ENCODE measurements at regions of chr16 and their contacts with region 1.

Region 1: GRCh38 chr16:57734925-57735754 is 430 bp upstream of the KATNB1 start:
- DNase-seq: peak; percentile 88 to 100 (median 98)
- ATAC-seq: peak; percentile 96
- H3K4me3 ChIP-seq: peak overlapping the region; percentile 93
- H3K4me3 Mint-ChIP-seq: peak overlapping the region; percentile 90 to 99 (median 96)
- H3K27ac ChIP-seq: peak overlapping the region; percentile 80
- H3K27ac Mint-ChIP-seq: peak overlapping the region; percentile 81 to 98 (median 93)
- H3K4me1 ChIP-seq: peaks cover 12 to 14% of the 10 kb centered on the region in 2 donors
- H3K4me1 Mint-ChIP-seq: peaks cover 14 to 38% (median 26%) of the 10 kb centered on the region in 7 donors
- H3K27me3 ChIP-seq: no peaks in the 10 kb centered on the region
- H3K27me3 Mint-ChIP-seq: no peaks in the 10 kb centered on the region

Region 2: GRCh38 chr16:56681939-56682702 is 1053.0 kb before region 1 on chr16 and contains the start of gene MT1X:
- CTCF ChIA-PET with region 1: no interaction called
- POLR2A ChIA-PET with region 1: no interaction called
- intact Hi-C with region 1: loop called in 1 of 2 experiments (anchors 1 kb)
- DNase-seq: peak; percentile 77 to 94 (median 88)
- ATAC-seq: peak; percentile 100
- H3K4me3 ChIP-seq: peak within 1 kb of the TSS; percentile 93
- H3K4me3 Mint-ChIP-seq: peak within 1 kb of the TSS; percentile 86 to 99 (median 96)
- H3K27ac ChIP-seq: peak within 1 kb of the TSS; percentile 81
- H3K27ac Mint-ChIP-seq: peak within 1 kb of the TSS; percentile 89 to 99 (median 95)
- H3K4me1 ChIP-seq: peaks cover 13 to 15% of the 10 kb centered on the region in 2 donors
- H3K4me1 Mint-ChIP-seq: peaks cover 0 to 28% (median 25%) of the 10 kb centered on the region in 7 donors
- H3K27me3 ChIP-seq: no peaks in the 10 kb centered on the region
- H3K27me3 Mint-ChIP-seq: peaks cover 0 to 2% (median 0%) of the 10 kb centered on the region in 5 donors
- total RNA-seq, gene MT1X: 15.0 to 70.7 (median 25.9) TPM

Region 3: GRCh38 chr16:57447186-57447962 is 287.8 kb before region 1 on chr16 and contains the starts of genes CIAPIN1 and COQ9:
- CTCF ChIA-PET with region 1: no interaction called
- POLR2A ChIA-PET with region 1: interaction called, 6 read pairs
- intact Hi-C with region 1: loop called (anchors 1 kb)
- DNase-seq: peak; percentile 83 to 94 (median 88)
- ATAC-seq: peak; percentile 99
- H3K4me3 ChIP-seq: peak within 1 kb of the TSS; percentile 84
- H3K4me3 Mint-ChIP-seq: peak within 1 kb of the TSS; percentile 90 to 97 (median 92)
- H3K27ac ChIP-seq: peak within 1 kb of the TSS; percentile 87
- H3K27ac Mint-ChIP-seq: peak within 1 kb of the TSS; percentile 75 to 96 (median 90)
- H3K4me1 ChIP-seq: peaks cover 7 to 17% of the 10 kb centered on the region in 2 donors
- H3K4me1 Mint-ChIP-seq: peaks cover 15 to 64% (median 45%) of the 10 kb centered on the region in 7 donors
- H3K27me3 ChIP-seq: no peaks in the 10 kb centered on the region
- H3K27me3 Mint-ChIP-seq: no peaks in the 10 kb centered on the region
- total RNA-seq, gene CIAPIN1: 33.6 to 52.8 (median 35.8) TPM
- total RNA-seq, gene COQ9: 16.4 to 45.4 (median 36.6) TPM

Region 4: DNA sequence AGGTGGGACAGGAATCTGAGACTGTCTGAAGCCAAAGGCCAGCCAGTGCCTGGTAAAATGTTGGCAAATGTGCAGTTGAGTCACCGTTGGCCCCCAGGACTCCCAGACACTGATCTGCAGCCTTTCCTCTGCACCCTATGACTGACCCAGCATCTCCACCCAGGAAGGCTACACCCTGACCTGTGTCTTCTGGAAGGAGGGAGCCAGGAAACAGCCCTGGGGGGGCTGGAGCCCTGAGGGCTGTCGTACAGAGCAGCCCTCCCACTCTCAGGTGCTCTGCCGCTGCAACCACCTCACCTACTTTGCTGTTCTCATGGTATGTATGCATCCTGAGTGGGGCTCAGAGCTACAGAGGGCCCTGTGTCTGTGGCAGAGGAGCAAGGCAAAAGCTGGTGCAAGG is 168.7 kb before region 1 on chr16:
- CTCF ChIA-PET with region 1: no interaction called
- POLR2A ChIA-PET with region 1: no interaction called
- intact Hi-C with region 1: no loop called
- DNase-seq: no peak
- ATAC-seq: no peak
- H3K4me3 ChIP-seq: no peak overlapping the region
- H3K4me3 Mint-ChIP-seq: no peak overlapping the region
- H3K27ac ChIP-seq: no peak overlapping the region
- H3K27ac Mint-ChIP-seq: peak overlapping the region in 2 of 9 donors; percentile 5 to 65
- H3K4me1 ChIP-seq: no peaks in the 10 kb centered on the region
- H3K4me1 Mint-ChIP-seq: peaks cover 0 to 6% (median 0%) of the 10 kb centered on the region in 7 donors
- H3K27me3 ChIP-seq: no peaks in the 10 kb centered on the region
- H3K27me3 Mint-ChIP-seq: peaks cover 0 to under 1% (median 0%) of the 10 kb centered on the region in 5 donors

Region 5: DNA sequence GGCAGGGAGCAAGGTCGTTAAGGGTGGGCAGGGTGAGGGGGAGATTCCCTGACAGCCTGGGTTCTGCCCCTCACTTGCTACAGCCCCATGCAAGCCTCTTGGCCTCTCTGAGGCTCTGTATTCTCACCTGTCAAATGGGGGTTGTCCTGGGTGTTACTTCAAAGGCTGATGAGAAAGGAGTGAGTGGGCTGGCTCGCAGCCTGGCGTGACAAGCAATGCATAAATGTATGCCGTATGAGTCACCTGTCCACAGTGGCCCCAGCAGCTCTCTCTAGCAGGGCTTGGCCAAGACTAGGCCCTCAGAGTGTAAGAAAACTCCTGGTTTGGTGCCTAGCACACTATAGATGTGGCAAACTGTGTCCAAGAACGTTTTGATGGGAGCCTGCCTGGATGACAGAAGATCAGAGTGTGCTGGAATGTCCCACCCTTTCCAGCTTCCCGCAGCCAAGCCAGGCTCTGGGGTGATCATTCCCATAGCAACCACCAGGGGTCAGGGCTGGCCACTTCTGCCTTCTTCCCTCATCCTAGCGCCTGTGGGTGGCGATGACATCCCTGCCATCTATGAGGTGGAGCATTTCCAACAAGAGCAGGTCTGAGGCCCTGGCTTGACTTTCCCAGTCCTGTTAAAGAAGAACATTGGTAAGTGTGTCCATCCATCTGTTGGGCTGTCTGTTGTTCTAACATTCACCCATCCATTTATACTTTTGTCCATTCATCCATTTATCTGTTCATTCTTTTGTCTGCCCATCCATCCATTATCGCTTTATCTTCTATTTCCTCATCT is 143.9 kb before region 1 on chr16:
- CTCF ChIA-PET with region 1: no interaction called
- POLR2A ChIA-PET with region 1: no interaction called
- intact Hi-C with region 1: loop called (anchors 2 to 5 kb)
- DNase-seq: peak; percentile 30 to 72 (median 48)
- ATAC-seq: peak; percentile 70
- H3K4me3 ChIP-seq: peak overlapping the region; percentile 25
- H3K4me3 Mint-ChIP-seq: peak overlapping the region; percentile 9 to 83 (median 69)
- H3K27ac ChIP-seq: no peak overlapping the region
- H3K27ac Mint-ChIP-seq: peak overlapping the region; percentile 17 to 92 (median 75)
- H3K4me1 ChIP-seq: peaks cover 27 to 47% of the 10 kb centered on the region in 2 donors
- H3K4me1 Mint-ChIP-seq: peaks cover 26 to 43% (median 38%) of the 10 kb centered on the region in 7 donors
- H3K27me3 ChIP-seq: no peaks in the 10 kb centered on the region
- H3K27me3 Mint-ChIP-seq: peaks cover 0 to 2% (median 0%) of the 10 kb centered on the region in 5 donors

Region 6: GRCh38 chr16:57694725-57695679 is 40.1 kb before region 1 on chr16 and contains the start of gene DRC7:
- CTCF ChIA-PET with region 1: no interaction called
- POLR2A ChIA-PET with region 1: interaction called, 6 read pairs
- intact Hi-C with region 1: loop called in 1 of 2 experiments (anchors 5 kb)
- DNase-seq: peak in 2 of 9 donors; percentile 7 to 8
- ATAC-seq: peak; percentile 60
- H3K4me3 ChIP-seq: no peak within 1 kb of the TSS
- H3K4me3 Mint-ChIP-seq: peak within 1 kb of the TSS in 5 of 10 donors; percentile 4 to 75 (median 25)
- H3K27ac ChIP-seq: no peak within 1 kb of the TSS
- H3K27ac Mint-ChIP-seq: peak within 1 kb of the TSS in 5 of 9 donors; percentile 48 to 87 (median 65)
- H3K4me1 ChIP-seq: peaks cover 5% of the 10 kb centered on the region in 2 donors
- H3K4me1 Mint-ChIP-seq: peaks cover 3 to 19% (median 10%) of the 10 kb centered on the region in 7 donors
- H3K27me3 ChIP-seq: no peaks in the 10 kb centered on the region
- H3K27me3 Mint-ChIP-seq: peaks cover 0 to 9% (median 0%) of the 10 kb centered on the region in 5 donors
- total RNA-seq, gene DRC7: not detected

Region 7: GRCh38 chr16:57834936-57835335 is 99.8 kb after region 1 on chr16:
- CTCF ChIA-PET with region 1: no interaction called
- POLR2A ChIA-PET with region 1: no interaction called
- intact Hi-C with region 1: no loop called
- DNase-seq: no peak
- ATAC-seq: no peak
- H3K4me3 ChIP-seq: no peak overlapping the region
- H3K4me3 Mint-ChIP-seq: no peak overlapping the region
- H3K27ac ChIP-seq: no peak overlapping the region
- H3K27ac Mint-ChIP-seq: no peak overlapping the region
- H3K4me1 ChIP-seq: no peaks in the 10 kb centered on the region
- H3K4me1 Mint-ChIP-seq: no peaks in the 10 kb centered on the region
- H3K27me3 ChIP-seq: no peaks in the 10 kb centered on the region
- H3K27me3 Mint-ChIP-seq: peaks cover 0 to 15% (median 0%) of the 10 kb centered on the region in 5 donors

Region 8: DNA sequence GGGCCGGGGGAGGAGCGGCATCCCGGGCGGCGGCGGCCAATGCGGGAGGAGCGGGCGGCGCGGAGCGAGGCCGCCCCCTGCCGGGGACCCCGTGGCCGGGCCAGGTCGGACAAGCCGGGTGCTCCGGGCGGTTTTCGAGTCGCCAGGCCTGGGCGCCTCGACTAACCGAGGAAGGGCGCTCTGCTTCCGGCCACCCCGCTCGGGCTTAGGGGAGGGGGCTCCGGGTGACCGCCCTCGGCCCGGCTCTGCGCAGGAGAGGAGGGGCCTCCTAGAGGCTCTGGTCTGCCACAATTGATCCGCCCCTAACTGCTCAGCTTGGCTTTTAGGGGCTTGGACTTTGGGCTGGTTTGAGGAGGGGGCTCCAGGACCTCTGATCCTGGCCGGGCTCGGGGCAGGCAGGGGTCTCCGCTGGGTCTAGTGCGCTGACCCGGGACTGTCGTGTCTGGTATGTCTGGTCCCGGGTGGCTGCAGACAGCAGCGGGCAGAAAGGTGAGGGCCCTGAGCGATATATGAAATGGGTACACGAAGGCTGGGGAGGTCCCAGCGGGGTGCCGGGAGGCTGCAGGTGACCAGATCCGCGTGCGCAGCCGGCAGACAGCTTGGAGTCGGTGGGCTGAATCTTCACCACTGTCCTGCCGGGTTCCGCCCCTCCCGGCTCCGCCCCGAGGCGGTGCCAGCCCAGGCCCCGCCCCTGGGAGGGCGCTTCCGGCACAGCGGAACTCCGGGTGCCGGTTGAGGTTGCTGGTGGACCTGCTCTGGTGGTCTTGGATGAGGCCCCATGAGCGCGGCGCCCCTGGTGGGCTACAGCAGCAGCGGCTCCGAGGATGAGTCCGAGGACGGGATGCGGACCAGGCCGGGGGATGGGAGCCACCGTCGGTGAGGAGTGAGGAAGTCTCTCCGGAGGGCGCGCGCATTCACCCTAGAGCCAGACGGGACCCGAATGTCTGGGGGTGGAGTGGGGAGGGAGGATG is 265.9 kb after region 1 on chr16 and contains the start of gene USB1:
- CTCF ChIA-PET with region 1: no interaction called
- POLR2A ChIA-PET with region 1: no interaction called
- intact Hi-C with region 1: loop called (anchors 1 kb)
- DNase-seq: peak; percentile 74 to 96 (median 86)
- ATAC-seq: peak; percentile 87
- H3K4me3 ChIP-seq: peak within 1 kb of the TSS; percentile 98
- H3K4me3 Mint-ChIP-seq: peak within 1 kb of the TSS; percentile 85 to 94 (median 92)
- H3K27ac ChIP-seq: peak within 1 kb of the TSS; percentile 85
- H3K27ac Mint-ChIP-seq: peak within 1 kb of the TSS; percentile 76 to 95 (median 90)
- H3K4me1 ChIP-seq: peaks cover 37% of the 10 kb centered on the region in 2 donors
- H3K4me1 Mint-ChIP-seq: peaks cover 31 to 75% (median 58%) of the 10 kb centered on the region in 7 donors
- H3K27me3 ChIP-seq: no peaks in the 10 kb centered on the region
- H3K27me3 Mint-ChIP-seq: no peaks in the 10 kb centered on the region
- total RNA-seq, gene USB1: 28.7 to 50.8 (median 28.9) TPM